PC-3 (cell line): ENCODE measurements at regions of chr1 and their contacts with region 1.

Region 1: GRCh38 chr1:6602669-6603237 is at the start of gene KLHL21:
- DNase-seq: peak; percentile 97
- ATAC-seq: peak; percentile 54
- H3K4me3 ChIP-seq: peak within 1 kb of the TSS; percentile 86
- H3K27ac ChIP-seq: peak within 1 kb of the TSS; percentile 93
- H3K4me1 ChIP-seq: peaks cover 30% of the 10 kb centered on the region
- H3K27me3 ChIP-seq: no peaks in the 10 kb centered on the region
- CTCF ChIP-seq: no peak
- total RNA-seq, gene KLHL21: 82.5 and 105 TPM in 2 replicates

Region 2: GRCh38 chr1:6438047-6438525 is 164.7 kb before region 1 on chr1:
- CTCF ChIA-PET with region 1: no interaction called
- POLR2A ChIA-PET with region 1: interaction called, 37 read pairs
- intact Hi-C with region 1: no loop called
- DNase-seq: peak; percentile 92
- ATAC-seq: peak; percentile 65
- H3K4me3 ChIP-seq: no peak overlapping the region
- H3K27ac ChIP-seq: no peak overlapping the region
- H3K4me1 ChIP-seq: no peaks in the 10 kb centered on the region; the same call in 1 of the 2 replicates
- H3K27me3 ChIP-seq: no peaks in the 10 kb centered on the region
- CTCF ChIP-seq: peak; percentile 94

Region 3: GRCh38 chr1:6554031-6554906 is 48.5 kb before region 1 on chr1 and contains the start of gene NOL9:
- CTCF ChIA-PET with region 1: interaction called, 3 read pairs
- POLR2A ChIA-PET with region 1: no interaction called
- intact Hi-C with region 1: loop called (anchors 1 kb)
- DNase-seq: peak; percentile 98
- ATAC-seq: peak; percentile 96
- H3K4me3 ChIP-seq: peak within 1 kb of the TSS; percentile 89
- H3K27ac ChIP-seq: no peak within 1 kb of the TSS
- H3K4me1 ChIP-seq: peaks cover 12% of the 10 kb centered on the region
- H3K27me3 ChIP-seq: no peaks in the 10 kb centered on the region
- CTCF ChIP-seq: peak; percentile 97
- total RNA-seq, gene NOL9: 79.1 and 102 TPM in 2 replicates

Region 4: DNA sequence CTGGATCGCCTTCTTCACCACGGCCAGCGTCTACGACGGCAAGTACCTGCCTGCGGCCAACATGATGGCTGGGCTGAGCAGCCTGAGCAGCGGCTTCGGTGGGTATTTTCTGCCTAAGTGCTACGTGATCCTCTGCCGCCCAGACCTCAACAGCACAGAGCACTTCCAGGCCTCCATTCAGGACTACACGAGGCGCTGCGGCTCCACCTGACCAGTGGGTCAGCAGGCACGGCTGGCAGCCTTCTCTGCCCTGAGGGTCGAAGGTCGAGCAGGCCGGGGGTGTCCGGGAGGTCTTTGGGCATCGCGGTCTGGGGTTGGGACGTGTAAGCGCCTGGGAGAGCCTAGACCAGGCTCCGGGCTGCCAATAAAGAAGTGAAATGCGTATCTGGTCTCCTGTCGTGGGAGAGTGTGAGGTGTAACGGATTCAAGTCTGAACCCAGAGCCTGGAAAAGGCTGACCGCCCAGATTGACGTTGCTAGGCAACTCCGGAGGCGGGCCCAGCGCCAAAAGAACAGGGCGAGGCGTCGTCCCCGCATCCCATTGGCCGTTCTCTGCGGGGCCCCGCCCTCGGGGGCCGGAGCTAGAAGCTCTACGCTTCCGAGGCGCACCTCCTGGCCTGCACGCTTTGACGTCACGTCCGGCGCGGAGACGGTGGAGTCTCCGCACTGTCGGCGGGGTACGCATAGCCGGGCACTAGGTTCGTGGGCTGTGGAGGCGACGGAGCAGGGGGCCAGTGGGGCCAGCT is 23.2 kb before region 1 on chr1 and contains the start of gene ZBTB48:
- CTCF ChIA-PET with region 1: interaction called, 4 read pairs
- POLR2A ChIA-PET with region 1: interaction called, 7 read pairs
- intact Hi-C with region 1: loop called (anchors 1 kb)
- DNase-seq: peak; percentile 100
- ATAC-seq: peak; percentile 96
- H3K4me3 ChIP-seq: peak within 1 kb of the TSS; percentile 92
- H3K27ac ChIP-seq: 0 out of 2 replicates have a peak within 1 kb of the TSS, but pooled peaks have one; percentile 11
- H3K4me1 ChIP-seq: peaks cover 27% of the 10 kb centered on the region
- H3K27me3 ChIP-seq: no peaks in the 10 kb centered on the region
- CTCF ChIP-seq: no peak
- total RNA-seq, gene ZBTB48: 42.7 and 47.2 TPM in 2 replicates

Region 5: GRCh38 chr1:6613361-6614018 is 10.7 kb after region 1 on chr1 and contains the start of gene PHF13:
- CTCF ChIA-PET with region 1: no interaction called
- POLR2A ChIA-PET with region 1: interaction called, 6 read pairs
- intact Hi-C with region 1: loop called (anchors 1 kb)
- DNase-seq: peak; percentile 100
- ATAC-seq: peak; percentile 91
- H3K4me3 ChIP-seq: peak within 1 kb of the TSS; percentile 82
- H3K27ac ChIP-seq: peak within 1 kb of the TSS; percentile 81
- H3K4me1 ChIP-seq: peaks cover 16% of the 10 kb centered on the region
- H3K27me3 ChIP-seq: no peaks in the 10 kb centered on the region
- CTCF ChIP-seq: no peak
- total RNA-seq, gene PHF13: 13.2 and 14.9 TPM in 2 replicates

Region 6: DNA sequence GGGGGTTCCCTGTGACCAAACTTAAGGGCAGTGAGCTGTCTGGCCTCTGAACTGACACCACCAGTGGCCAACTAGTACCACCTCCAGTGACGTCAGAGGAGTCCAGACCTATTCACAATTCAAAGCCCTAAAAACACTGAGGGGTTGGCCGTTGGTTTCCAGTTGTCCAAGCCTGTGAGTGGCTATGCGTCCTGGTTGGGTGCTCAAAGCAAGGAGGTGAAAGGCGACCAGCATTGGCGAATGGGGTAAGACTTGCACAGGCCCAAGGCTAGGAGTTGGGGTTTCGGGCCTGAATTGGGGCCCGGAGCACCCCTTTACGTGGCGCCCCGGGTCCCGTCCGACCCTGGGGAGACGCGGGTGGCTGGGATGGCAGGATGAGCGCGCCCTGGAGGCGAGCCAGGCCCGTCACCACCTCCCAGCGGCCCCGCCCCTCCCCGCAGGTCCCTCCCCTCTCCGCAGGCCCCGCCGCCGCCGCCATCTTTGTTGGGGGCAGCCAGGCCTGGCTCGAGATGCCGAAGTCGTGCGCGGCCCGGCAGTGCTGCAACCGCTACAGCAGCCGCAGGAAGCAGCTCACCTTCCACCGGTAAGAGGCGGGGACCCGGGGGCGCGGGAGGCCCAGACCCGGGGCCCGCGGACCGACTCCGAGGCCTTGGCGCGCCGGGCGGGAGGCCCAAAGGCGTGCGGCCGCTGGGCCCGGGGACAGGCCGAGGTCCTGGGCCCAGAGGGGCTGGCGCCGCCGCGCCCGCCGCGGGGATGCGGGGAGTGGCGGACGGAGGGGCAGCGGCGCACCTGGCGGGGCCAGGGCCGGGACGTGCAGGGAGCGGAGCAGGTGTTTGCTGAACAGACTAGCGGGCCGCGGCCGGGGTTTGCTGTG is 22.2 kb after region 1 on chr1 and contains the start of gene THAP3:
- CTCF ChIA-PET with region 1: no interaction called
- POLR2A ChIA-PET with region 1: interaction called, 3 read pairs
- intact Hi-C with region 1: loop called (anchors 1 kb)
- DNase-seq: peak; percentile 86
- ATAC-seq: peak; percentile 84
- H3K4me3 ChIP-seq: peak within 1 kb of the TSS; percentile 89
- H3K27ac ChIP-seq: peak within 1 kb of the TSS; percentile 8
- H3K4me1 ChIP-seq: peaks cover 13% of the 10 kb centered on the region
- H3K27me3 ChIP-seq: no peaks in the 10 kb centered on the region
- CTCF ChIP-seq: no peak
- total RNA-seq, gene THAP3: 42.4 and 54.6 TPM in 2 replicates

Region 7: GRCh38 chr1:6646499-6647148 is 43.9 kb after region 1 on chr1:
- CTCF ChIA-PET with region 1: no interaction called
- POLR2A ChIA-PET with region 1: interaction called, 12 read pairs
- intact Hi-C with region 1: no loop called
- DNase-seq: peak; percentile 68
- ATAC-seq: peak; percentile 53
- H3K4me3 ChIP-seq: no peak overlapping the region
- H3K27ac ChIP-seq: no peak overlapping the region
- H3K4me1 ChIP-seq: no peaks in the 10 kb centered on the region
- H3K27me3 ChIP-seq: no peaks in the 10 kb centered on the region
- CTCF ChIP-seq: peak; percentile 90